ENCODE measurements at regions of chr2 and their contacts with region 1.

Region 1: GRCh38 chr2:215454519-215455246 is 18.8 kb upstream of the FN1 start:
- DNase-seq: no peak
- ATAC-seq: no peak
- H3K4me3 Mint-ChIP-seq: no peak overlapping the region
- H3K27ac Mint-ChIP-seq: no peak overlapping the region
- H3K4me1 Mint-ChIP-seq: no peaks in the 10 kb centered on the region
- H3K27me3 Mint-ChIP-seq: peaks cover 17% of the 10 kb centered on the region
- CTCF ChIP-seq: peak; percentile 71

Region 2: GRCh38 chr2:215505044-215505786 is 50.5 kb after region 1 on chr2:
- CTCF ChIA-PET with region 1: no interaction called
- POLR2A ChIA-PET with region 1: no interaction called
- intact Hi-C with region 1: no loop called
- DNase-seq: no peak
- ATAC-seq: no peak
- H3K4me3 Mint-ChIP-seq: no peak overlapping the region
- H3K27ac Mint-ChIP-seq: no peak overlapping the region
- H3K4me1 Mint-ChIP-seq: no peaks in the 10 kb centered on the region
- H3K27me3 Mint-ChIP-seq: no peaks in the 10 kb centered on the region
- CTCF ChIP-seq: no peak

Region 3: GRCh38 chr2:215828517-215829184 is 374.0 kb after region 1 on chr2:
- CTCF ChIA-PET with region 1: interaction called, 4 read pairs
- POLR2A ChIA-PET with region 1: no interaction called
- intact Hi-C with region 1: loop called (anchors 1 kb)
- DNase-seq: no peak
- ATAC-seq: no peak
- H3K4me3 Mint-ChIP-seq: no peak overlapping the region
- H3K27ac Mint-ChIP-seq: no peak overlapping the region
- H3K4me1 Mint-ChIP-seq: peaks cover 1% of the 10 kb centered on the region
- H3K27me3 Mint-ChIP-seq: peaks cover 4% of the 10 kb centered on the region
- CTCF ChIP-seq: no peak

Region 4: GRCh38 chr2:215931256-215931903 is 476.7 kb after region 1 on chr2:
- CTCF ChIA-PET with region 1: interaction called, 18 read pairs
- POLR2A ChIA-PET with region 1: no interaction called
- intact Hi-C with region 1: loop called (anchors 1 kb)
- DNase-seq: no peak
- ATAC-seq: peak; percentile 65
- H3K4me3 Mint-ChIP-seq: no peak overlapping the region
- H3K27ac Mint-ChIP-seq: no peak overlapping the region
- H3K4me1 Mint-ChIP-seq: no peaks in the 10 kb centered on the region
- H3K27me3 Mint-ChIP-seq: peaks cover 5% of the 10 kb centered on the region
- CTCF ChIP-seq: peak; percentile 87

Measured in activated B cell treated with CpG ODN at 0.5 μM for 24 hours (primary cell).